Lower leg skin (tissue), 4 donors: ENCODE measurements at regions of chr10 and their contacts with region 1.

Region 1: DNA sequence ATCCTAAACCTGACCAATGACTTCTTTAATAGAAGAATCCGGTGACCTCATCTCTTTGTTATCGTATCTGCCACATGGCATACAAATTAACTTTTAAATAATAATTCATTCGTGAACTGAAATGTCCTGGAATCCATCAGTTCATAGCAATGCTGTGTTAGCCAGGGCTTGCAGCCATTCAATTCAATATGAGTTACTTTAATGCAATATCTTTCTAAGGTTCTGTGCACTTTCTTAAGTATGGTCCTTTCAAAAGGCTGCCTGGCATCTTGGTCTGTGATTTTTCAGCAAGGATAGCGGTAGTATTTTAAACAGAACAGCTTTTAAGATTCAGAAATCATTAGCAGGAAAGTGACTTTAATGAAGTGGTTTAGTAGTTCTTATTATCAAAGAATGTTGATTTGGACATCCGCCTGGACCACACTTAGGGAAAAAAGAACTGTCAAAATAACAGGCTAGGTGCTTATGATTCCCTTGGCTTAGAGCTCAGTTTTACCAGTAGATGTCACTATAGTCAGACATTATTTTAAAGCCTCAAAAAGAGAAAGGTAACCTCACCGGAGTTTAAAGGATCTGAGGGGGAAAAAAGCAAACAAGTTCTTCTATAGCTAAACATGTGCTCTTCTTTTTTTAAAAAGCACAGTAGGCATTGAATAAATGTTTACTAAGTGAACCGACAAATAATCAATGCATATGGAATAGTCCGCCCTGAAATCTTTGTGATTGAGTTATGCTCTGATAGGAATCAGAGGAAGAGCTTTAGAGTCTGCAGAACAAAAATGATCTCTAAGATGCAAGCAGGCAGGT is 22.7 kb downstream of the SLC35G1 start:
- DNase-seq: no peak
- H3K4me3 ChIP-seq: no peak overlapping the region
- CTCF ChIP-seq: no peak
- POLR2A ChIP-seq: no peak

Region 2: GRCh38 chr10:94108200-94108599 is 191.7 kb after region 1 on chr10:
- intact Hi-C with region 1: no loop called
- DNase-seq: no peak
- H3K4me3 ChIP-seq: no peak overlapping the region
- CTCF ChIP-seq: no peak
- POLR2A ChIP-seq: no peak

Region 3: DNA sequence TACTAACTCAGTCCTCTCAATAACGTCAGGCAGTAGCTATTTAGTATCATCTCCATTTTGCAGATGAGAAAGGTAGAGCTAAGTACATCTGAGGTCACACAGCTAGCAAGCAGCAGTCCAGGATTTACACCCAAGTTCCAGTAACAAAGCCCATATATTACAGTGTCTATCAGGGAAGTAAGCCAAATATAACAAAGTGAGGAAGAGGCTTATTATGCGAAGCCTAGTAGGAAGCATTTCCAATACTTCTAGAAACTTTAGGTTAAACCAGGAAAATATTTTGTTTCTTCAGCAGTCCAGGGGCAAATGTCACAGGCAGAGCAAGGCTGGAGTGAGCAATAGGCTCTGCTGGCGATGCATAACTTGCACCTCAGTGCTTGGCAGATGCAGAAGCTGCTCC is 392.4 kb after region 1 on chr10:
- intact Hi-C with region 1: loop called (anchors 10 kb)
- DNase-seq: no peak
- H3K4me3 ChIP-seq: no peak overlapping the region
- CTCF ChIP-seq: no peak
- POLR2A ChIP-seq: no peak

Region 4: GRCh38 chr10:94320285-94320914 is 403.9 kb after region 1 on chr10:
- intact Hi-C with region 1: loop called (anchors 5 kb)
- DNase-seq: peak; percentile 58 to 91
- H3K4me3 ChIP-seq: no peak overlapping the region
- CTCF ChIP-seq: no peak
- POLR2A ChIP-seq: no peak